ENCODE measurements at regions of chr15 and their contacts with region 1.

Region 1: GRCh38 chr15:56524915-56525314 is 60.0 kb upstream of the MNS1 start:
- DNase-seq: no peak
- ATAC-seq: no peak
- H3K4me3 ChIP-seq: no peak overlapping the region
- H3K27ac ChIP-seq: no peak overlapping the region
- H3K4me1 ChIP-seq: peaks cover 0 to 5% (median 0%) of the 10 kb centered on the region in 12 donors
- H3K27me3 ChIP-seq: no peaks in the 10 kb centered on the region
- CTCF ChIP-seq: no peak
- POLR2A ChIP-seq: no peak

Region 2: DNA sequence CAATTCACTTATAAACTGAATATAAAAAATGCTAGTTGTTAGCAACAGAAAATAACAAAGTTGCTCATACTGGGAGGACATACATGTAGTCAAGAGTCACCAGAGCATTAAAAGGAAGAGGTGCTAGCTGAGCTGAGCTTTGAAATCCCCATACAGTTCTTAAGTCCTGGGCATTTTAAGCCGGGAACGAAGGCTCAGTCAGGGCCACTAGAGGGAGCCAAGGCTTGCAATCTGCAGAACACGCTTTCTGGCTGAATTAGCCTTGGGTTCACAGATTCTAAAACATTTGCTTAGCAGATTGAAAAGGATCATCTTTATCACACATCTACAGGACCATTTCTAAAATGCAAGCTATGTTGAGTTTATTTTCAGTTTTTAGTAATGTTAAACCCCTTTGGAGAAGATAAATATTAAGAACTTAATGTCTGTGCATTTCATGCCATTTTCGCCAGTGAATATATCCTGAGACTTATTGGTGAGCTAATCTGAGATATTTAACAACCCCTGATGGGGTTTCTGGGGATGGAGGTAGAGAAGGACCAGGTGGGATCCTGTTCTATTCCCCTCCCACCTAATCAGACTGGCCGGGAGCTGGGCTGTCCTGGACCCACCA is 33.7 kb before region 1 on chr15:
- intact Hi-C with region 1: no loop called
- DNase-seq: peak; percentile 29 to 60 (median 42)
- ATAC-seq: peak in 2 of 4 donors; percentile 59 to 76
- H3K4me3 ChIP-seq: no peak overlapping the region
- H3K27ac ChIP-seq: no peak overlapping the region
- H3K4me1 ChIP-seq: no peaks in the 10 kb centered on the region
- H3K27me3 ChIP-seq: no peaks in the 10 kb centered on the region
- CTCF ChIP-seq: peak; percentile 64 to 90 (median 76)
- POLR2A ChIP-seq: no peak

Region 3: DNA sequence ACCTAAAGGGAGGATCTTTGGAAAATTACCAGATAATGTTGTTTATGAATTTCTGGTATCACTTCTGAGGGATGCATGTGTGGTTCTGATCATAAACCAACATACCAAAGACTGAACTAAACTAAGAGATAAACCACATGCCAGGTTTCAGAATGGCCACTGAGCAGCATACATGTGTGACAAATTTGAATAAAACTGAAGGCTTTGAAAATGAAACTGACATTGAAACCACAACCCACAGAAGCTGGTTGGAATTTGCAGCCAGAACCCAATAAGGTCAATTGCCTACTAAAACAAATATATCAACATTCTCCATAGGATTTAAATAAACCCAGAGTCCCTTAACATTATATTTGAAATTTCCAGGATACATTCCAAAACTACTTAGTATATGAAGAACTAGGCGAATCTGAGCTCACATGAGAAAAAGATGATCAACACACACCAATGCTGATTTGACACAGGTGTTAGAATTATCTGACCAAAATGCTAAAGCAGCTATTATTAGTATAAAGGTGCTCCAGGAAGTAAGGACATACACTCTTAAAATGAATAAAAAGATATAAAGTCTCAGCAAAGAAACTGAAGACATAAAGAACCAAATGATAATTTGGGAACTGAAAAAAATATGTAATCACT is 83.3 kb after region 1 on chr15:
- intact Hi-C with region 1: loop called in 1 of 10 experiments (anchors 10 kb)
- DNase-seq: no peak
- ATAC-seq: no peak
- H3K4me3 ChIP-seq: no peak overlapping the region
- H3K27ac ChIP-seq: no peak overlapping the region
- H3K4me1 ChIP-seq: no peaks in the 10 kb centered on the region
- H3K27me3 ChIP-seq: no peaks in the 10 kb centered on the region
- CTCF ChIP-seq: no peak
- POLR2A ChIP-seq: no peak